ENCODE measurements at regions of chr20 and their contacts with region 1.

Region 1: DNA sequence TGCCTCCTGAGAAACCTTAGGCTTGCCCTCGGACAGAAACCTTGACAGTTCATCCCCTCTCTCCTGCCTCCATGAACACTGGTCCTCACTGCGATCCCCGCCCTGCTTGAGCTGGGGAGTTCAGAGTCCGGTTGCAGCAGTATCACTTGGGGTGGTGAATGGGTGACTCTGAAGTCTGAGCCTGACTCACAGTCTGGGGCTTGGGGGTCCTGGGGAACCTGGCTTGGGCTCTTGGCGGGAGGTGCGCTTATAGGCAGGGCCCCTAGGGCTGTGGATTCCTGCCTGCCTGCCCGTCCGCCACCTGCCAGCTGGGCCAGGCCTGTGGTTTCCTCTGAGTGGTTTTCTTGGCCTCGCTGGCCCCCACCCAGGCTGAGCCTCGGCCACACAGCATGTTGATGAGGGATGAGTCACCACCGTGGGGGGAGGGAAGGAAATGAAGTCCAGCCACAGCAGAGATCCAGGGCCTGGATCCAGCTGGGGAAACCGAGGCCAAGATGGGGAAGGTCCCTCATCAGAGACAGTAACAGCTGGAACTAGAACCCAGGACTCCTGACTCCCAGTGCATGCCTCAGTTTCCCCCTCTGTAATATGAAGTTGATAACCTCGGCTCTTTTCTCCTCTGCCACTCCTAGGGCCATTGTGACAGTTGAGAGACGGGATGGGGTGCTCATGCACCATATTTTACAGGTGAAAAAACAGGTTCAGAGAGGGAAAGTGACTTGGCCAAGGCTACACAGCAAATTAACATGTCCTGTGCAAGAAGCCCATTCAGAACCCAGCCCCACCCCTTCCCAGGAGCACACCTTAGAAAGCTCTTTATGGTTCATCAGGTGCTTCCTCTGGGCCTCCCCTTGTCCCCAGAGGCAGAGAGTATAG is 9.2 kb downstream of the FOXS1 start:
- DNase-seq: peak; percentile 18
- H3K4me3 Mint-ChIP-seq: no peak overlapping the region
- H3K27ac Mint-ChIP-seq: no peak overlapping the region
- H3K4me1 Mint-ChIP-seq: peaks cover 3% of the 10 kb centered on the region
- H3K27me3 Mint-ChIP-seq: no peaks in the 10 kb centered on the region

Region 2: DNA sequence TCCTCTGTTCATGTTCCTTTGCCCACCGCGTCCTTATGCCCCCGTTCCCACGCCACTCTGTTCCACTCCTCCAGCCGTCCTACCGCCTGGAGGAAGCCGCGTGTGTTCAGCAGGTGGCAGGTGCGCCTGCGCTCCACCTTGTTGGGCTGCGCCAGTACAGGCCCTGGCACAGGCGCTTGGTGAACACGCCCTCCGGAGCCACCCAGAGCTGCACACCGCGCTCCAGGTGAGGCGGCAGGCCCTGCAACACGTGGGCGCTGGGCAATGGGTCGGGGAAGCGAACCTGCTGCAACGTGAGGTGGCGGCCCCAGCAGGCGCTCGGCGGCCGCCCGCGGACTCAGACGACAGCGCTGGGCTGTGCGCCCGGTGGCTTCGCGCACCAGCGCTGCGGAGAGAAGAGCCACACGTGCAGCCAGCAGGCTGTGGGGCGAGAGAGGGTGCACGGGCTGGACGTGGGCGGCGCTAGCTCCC is 13.3 kb after region 1 on chr20:
- CTCF ChIA-PET with region 1: interaction called, 26 read pairs
- intact Hi-C with region 1: no loop called
- DNase-seq: no peak
- H3K4me3 Mint-ChIP-seq: no peak overlapping the region
- H3K27ac Mint-ChIP-seq: no peak overlapping the region
- H3K4me1 Mint-ChIP-seq: no peaks in the 10 kb centered on the region
- H3K27me3 Mint-ChIP-seq: peaks cover 21% of the 10 kb centered on the region

Measured in activated naive CD4-positive, alpha-beta T cell treated with anti-CD3 and anti-CD28 coated beads for 36 hours (primary cell).